HEK293 (cell line): ENCODE measurements at regions of chr6 and their contacts with region 1.

Region 1: DNA sequence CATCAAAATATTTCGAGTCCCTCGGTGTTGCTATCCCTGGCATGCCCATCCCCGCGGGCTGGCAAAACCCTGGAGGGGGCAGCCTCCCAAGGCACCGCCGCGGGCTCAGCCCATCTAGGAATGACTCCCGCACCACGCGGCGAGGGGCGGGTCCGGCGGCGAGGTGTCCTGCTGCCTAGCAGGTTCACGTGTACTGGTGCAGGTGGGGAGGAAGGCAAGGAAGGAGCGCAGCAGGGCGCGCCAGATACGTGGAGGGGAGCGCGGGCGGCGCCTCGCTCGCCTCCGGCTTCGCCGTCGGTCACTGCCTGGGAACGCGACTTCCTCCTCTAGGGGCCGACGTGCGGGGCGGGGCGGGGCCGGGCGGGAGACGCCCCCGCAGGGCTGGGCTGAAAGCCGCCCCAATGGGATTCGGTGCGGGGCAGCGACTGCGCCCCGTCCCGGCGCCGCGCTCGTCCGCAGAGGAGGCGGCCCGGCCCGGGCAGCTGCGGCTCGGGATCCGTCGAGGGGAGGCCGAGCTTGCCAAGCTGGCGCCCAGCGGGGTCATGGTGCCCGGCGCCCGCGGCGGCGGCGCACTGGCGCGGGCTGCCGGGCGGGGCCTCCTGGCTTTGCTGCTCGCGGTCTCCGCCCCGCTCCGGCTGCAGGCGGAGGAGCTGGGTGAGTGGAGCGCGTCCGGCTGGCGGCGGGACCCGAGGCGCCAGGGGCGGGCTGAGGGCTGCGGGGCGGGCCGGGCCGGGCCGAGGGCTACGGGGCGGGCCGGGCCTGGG is at the start of gene DCBLD1:
- H3K4me3 ChIP-seq: peak within 1 kb of the TSS; percentile 85
- H3K27ac ChIP-seq: peak within 1 kb of the TSS; percentile 73
- H3K4me1 ChIP-seq: no peaks in the 10 kb centered on the region
- CTCF ChIP-seq: peak; percentile 60

Region 2: GRCh38 chr6:116570856-116571682 is 911.4 kb before region 1 on chr6 and contains the start of gene RWDD1:
- CTCF ChIA-PET with region 1: no interaction called
- POLR2A ChIA-PET with region 1: no interaction called
- H3K4me3 ChIP-seq: peak within 1 kb of the TSS; percentile 96
- H3K27ac ChIP-seq: peak within 1 kb of the TSS; percentile 85
- H3K4me1 ChIP-seq: peaks cover 2% of the 10 kb centered on the region; the same call in 1 of the 2 replicates
- CTCF ChIP-seq: peak; percentile 40; the same call in 1 of the 2 replicates

Region 3: DNA sequence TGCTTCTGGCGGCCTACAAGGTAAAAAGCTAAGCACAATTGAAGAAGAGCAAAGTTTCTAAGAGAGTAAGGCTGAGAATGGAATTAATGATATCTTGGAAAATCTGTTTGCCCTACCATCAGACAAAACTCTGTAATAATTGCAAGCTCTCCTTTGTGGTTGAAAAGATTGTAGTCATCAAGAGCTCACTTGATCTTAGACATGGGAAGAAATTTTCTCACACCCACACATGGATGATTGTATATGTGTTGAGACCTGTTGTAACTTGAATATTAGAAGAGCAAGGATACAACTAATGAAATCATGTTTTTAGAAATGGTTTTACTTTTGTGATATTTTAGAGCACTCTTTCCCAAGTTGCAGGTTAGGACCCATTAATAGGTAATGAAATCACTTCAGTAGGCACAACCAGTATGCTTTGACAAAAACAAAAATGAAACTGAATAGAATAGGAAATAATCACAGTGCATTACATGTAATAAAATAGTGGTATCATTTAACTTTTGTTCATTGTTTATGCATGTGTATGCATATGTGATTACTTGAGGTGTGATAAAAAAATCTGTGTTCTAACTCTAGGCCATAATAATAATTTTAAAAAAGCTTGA is 14.1 kb after region 1 on chr6:
- CTCF ChIA-PET with region 1: interaction called, 13 read pairs
- POLR2A ChIA-PET with region 1: interaction called, 11 read pairs
- H3K4me3 ChIP-seq: no peak overlapping the region
- H3K27ac ChIP-seq: no peak overlapping the region
- H3K4me1 ChIP-seq: peaks cover 8% of the 10 kb centered on the region
- CTCF ChIP-seq: no peak

Region 4: GRCh38 chr6:117555882-117556498 is 73.6 kb after region 1 on chr6:
- CTCF ChIA-PET with region 1: interaction called, 42 read pairs
- POLR2A ChIA-PET with region 1: no interaction called
- H3K4me3 ChIP-seq: no peak overlapping the region
- H3K27ac ChIP-seq: no peak overlapping the region
- H3K4me1 ChIP-seq: no peaks in the 10 kb centered on the region
- CTCF ChIP-seq: no peak